A549 (cell line): ENCODE measurements at regions of chr1 and their contacts with region 1.

Region 1: GRCh38 chr1:10378081-10378841 is 20.6 kb upstream of the PGD start:
- DNase-seq: peak; percentile 62 to 94
- ATAC-seq: peak; percentile 78 to 85
- H3K4me3 ChIP-seq: no peak overlapping the region
- H3K27ac ChIP-seq: peak overlapping the region; percentile 99
- H3K4me1 ChIP-seq: peaks cover 73% of the 10 kb centered on the region
- CTCF ChIP-seq: no peak
- EP300 ChIP-seq: no peak
- POLR2A ChIP-seq: no peak
- RAD21 ChIP-seq: no peak

Region 2: GRCh38 chr1:10398734-10399623 is 20.7 kb after region 1 on chr1 and contains the start of gene PGD:
- CTCF ChIA-PET with region 1: interaction called, 22 read pairs
- POLR2A ChIA-PET with region 1: interaction called, 30 read pairs
- DNase-seq: peak; percentile 88 to 97
- ATAC-seq: peak; percentile 93
- H3K4me3 ChIP-seq: peak within 1 kb of the TSS; percentile 89
- H3K27ac ChIP-seq: peak within 1 kb of the TSS; percentile 95 to 99
- H3K4me1 ChIP-seq: peaks cover 13% of the 10 kb centered on the region
- CTCF ChIP-seq: no peak
- EP300 ChIP-seq: no peak
- POLR2A ChIP-seq: peak; percentile 50
- RAD21 ChIP-seq: no peak
- polyA plus RNA-seq, gene PGD: 700 and 1,019 TPM in 2 replicates

Region 3: DNA sequence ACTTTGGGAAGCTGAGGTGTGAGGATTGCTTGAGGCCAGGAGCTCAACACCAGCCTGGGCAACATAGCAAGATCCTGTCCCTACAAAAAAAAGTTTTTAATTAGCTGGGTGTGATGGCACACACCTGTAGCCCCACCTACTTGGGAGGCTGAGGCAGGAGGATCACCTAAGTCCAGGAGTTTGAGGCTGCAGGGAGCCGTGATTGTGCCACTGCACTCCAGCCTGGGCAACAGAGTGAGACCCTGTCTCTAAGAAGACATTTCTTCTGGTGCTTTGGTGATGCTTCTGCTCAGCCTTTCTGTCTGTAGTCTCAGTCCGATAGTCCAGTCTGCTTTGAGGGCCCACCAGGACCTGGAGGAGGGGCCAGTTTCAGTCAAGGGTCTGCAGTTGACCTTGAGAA is 28.9 kb after region 1 on chr1:
- CTCF ChIA-PET with region 1: interaction called, 33 read pairs
- POLR2A ChIA-PET with region 1: interaction called, 7 read pairs
- DNase-seq: no peak
- ATAC-seq: 0 out of 6 replicates have a peak, but pooled peaks of 1 of the 2 experiments have one; percentile 1
- H3K4me3 ChIP-seq: peak overlapping the region; percentile 17; the same call in 1 of the 3 replicates
- H3K27ac ChIP-seq: peak overlapping the region; percentile 95 to 99
- H3K4me1 ChIP-seq: peaks cover 96% of the 10 kb centered on the region
- CTCF ChIP-seq: no peak
- EP300 ChIP-seq: no peak
- POLR2A ChIP-seq: no peak
- RAD21 ChIP-seq: no peak

Region 4: GRCh38 chr1:10415211-10415930 is 37.1 kb after region 1 on chr1:
- CTCF ChIA-PET with region 1: interaction called, 38 read pairs
- POLR2A ChIA-PET with region 1: interaction called, 7 read pairs
- DNase-seq: peak; percentile 51 to 96
- ATAC-seq: peak; percentile 80 to 81
- H3K4me3 ChIP-seq: peak overlapping the region; percentile 10; the same call in 1 of the 3 replicates
- H3K27ac ChIP-seq: peak overlapping the region; percentile 95 to 99
- H3K4me1 ChIP-seq: peaks cover 98% of the 10 kb centered on the region
- CTCF ChIP-seq: no peak
- EP300 ChIP-seq: peak; percentile 68 to 87; a peak in 3 of 5 replicates
- POLR2A ChIP-seq: no peak
- RAD21 ChIP-seq: no peak; a peak in 1 of 5 replicates

Region 5: GRCh38 chr1:10424034-10424433 is 45.8 kb after region 1 on chr1:
- CTCF ChIA-PET with region 1: interaction called, 63 read pairs
- POLR2A ChIA-PET with region 1: no interaction called
- DNase-seq: peak in 1 of 2 experiments; percentile 77
- ATAC-seq: peak; percentile 40 to 62
- H3K4me3 ChIP-seq: no peak overlapping the region
- H3K27ac ChIP-seq: peak overlapping the region; percentile 64 to 99
- H3K4me1 ChIP-seq: peaks cover 65% of the 10 kb centered on the region
- CTCF ChIP-seq: no peak
- EP300 ChIP-seq: no peak
- POLR2A ChIP-seq: no peak
- RAD21 ChIP-seq: no peak

Region 6: GRCh38 chr1:10430216-10431069 is 52.2 kb after region 1 on chr1 and contains the start of gene CENPS:
- CTCF ChIA-PET with region 1: interaction called, 63 read pairs
- POLR2A ChIA-PET with region 1: interaction called, 6 read pairs
- DNase-seq: peak; percentile 80 to 82
- ATAC-seq: peak; percentile 83 to 86
- H3K4me3 ChIP-seq: peak within 1 kb of the TSS; percentile 87
- H3K27ac ChIP-seq: peak within 1 kb of the TSS; percentile 87 to 97
- H3K4me1 ChIP-seq: peaks cover 18% of the 10 kb centered on the region
- CTCF ChIP-seq: peak; percentile 79
- EP300 ChIP-seq: no peak
- POLR2A ChIP-seq: peak; percentile 47
- RAD21 ChIP-seq: peak; percentile 42 to 62; a peak in 4 of 5 replicates
- polyA plus RNA-seq, gene CENPS: 19.7 and 25.7 TPM in 2 replicates